AG04450 (cell line): ENCODE measurements at regions of chr5 and their contacts with region 1.

Region 1: GRCh38 chr5:142324871-142325724 is at the start of gene SPRY4:
- DNase-seq: peak; percentile 97
- H3K4me3 ChIP-seq: peak within 1 kb of the TSS; percentile 88
- H3K27ac ChIP-seq: peak within 1 kb of the TSS; percentile 92
- H3K27me3 ChIP-seq: no peaks in the 10 kb centered on the region
- CTCF ChIP-seq: no peak
- polyA plus RNA-seq, gene SPRY4: 8.7 and 11.9 TPM in 2 replicates

Region 2: DNA sequence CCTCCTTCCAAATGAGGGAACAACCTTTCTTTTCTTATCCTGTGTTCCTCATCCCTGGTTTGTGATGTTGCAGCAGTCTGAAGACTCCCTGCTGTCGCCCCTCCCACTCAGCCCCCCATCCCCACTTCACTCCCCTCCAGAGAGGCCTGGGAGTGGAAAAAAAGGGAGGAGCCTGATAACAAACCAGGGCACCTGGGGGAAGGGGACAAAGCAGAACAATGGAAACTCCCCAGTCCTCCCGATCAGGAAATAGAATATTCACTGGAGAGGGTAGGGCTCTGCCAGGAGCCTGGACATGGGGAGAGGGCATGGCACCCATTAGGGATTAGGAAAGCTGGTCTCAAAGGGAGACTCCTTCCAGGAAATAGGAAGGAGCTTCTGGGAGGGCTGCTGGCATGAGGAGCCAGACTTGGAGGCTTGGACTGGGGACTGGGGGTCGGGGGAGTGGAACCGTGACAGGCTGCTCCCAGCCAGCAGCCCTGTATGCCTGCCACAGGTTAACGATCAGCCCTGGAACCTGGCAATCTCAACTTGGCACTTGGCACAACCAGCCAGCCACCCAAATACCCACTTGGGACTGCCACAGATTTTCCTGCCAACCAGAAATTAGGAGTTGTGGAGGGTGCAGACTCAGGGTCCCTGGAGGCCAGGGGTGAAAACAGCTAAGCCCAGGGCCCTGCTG is 466.9 kb before region 1 on chr5:
- CTCF ChIA-PET with region 1: no interaction called
- POLR2A ChIA-PET with region 1: no interaction called
- DNase-seq: no peak
- H3K4me3 ChIP-seq: no peak overlapping the region
- H3K27ac ChIP-seq: no peak overlapping the region
- H3K27me3 ChIP-seq: peaks cover 25% of the 10 kb centered on the region
- CTCF ChIP-seq: no peak

Region 3: GRCh38 chr5:142356716-142357473 is 31.8 kb after region 1 on chr5:
- CTCF ChIA-PET with region 1: interaction called, 4 read pairs
- POLR2A ChIA-PET with region 1: interaction called, 23 read pairs
- DNase-seq: peak; percentile 83
- H3K4me3 ChIP-seq: peak overlapping the region; percentile 63
- H3K27ac ChIP-seq: peak overlapping the region; percentile 95
- H3K27me3 ChIP-seq: no peaks in the 10 kb centered on the region
- CTCF ChIP-seq: no peak

Region 4: DNA sequence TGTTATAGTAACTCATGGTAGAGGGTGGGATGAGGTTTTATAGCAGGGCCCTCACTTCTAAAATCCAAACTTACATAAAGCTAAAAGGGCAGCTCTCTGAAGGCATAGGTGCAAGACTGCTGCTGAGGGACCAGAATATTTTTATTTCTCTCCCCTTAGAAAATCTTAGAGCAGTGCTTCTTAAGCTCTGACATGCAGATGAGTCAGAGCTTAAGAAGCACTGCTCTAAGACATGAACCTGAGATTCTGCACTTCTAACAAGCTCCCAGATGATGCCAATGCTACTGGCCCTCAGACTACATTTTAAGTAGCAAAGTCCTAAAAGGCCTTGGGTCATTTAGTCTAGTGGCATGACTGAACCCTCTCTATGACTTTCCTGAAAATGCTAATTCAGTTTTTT is 97.3 kb after region 1 on chr5:
- CTCF ChIA-PET with region 1: no interaction called
- POLR2A ChIA-PET with region 1: no interaction called
- DNase-seq: peak; percentile 34
- H3K4me3 ChIP-seq: no peak overlapping the region
- H3K27ac ChIP-seq: no peak overlapping the region
- H3K27me3 ChIP-seq: no peaks in the 10 kb centered on the region
- CTCF ChIP-seq: no peak